Activated B cell treated with CpG ODN at 0.5 μM for 24 hours (primary cell): ENCODE measurements at regions of chr16 and their contacts with region 1.

Region 1: DNA sequence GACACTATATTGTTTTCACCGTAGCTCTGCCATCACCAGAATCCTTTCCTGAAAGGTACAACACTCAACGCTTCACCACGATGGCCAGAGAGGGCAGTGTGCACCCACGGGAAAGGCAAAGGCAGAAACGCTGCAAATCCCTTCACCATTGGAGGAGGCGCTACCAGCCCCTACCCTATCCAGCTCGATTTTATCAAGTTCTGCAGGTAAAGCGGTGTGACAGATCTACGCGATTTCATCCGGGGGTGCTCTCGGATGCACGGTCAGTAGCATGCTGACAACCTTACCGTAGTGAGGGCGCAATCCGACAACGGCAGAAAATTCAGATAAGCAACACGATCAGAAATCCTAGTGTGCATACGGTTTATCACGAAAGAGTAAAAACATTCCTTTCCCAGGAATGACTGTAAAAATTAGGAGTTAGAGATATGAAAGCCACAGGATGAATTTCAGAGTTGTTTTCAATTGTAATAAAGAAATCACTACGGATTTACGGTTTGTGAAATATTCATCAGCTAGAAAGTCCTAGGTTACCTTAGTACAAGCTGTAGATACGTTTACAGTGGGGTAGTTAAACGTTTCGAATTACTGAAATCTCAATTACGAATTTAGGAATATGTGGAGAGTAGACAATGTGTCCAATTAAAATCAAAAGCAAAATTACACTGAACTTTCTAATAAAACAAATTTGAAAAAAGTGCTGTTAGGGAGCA is 1.8 kb downstream of the NETO2 start:
- DNase-seq: peak; percentile 69
- ATAC-seq: peak; percentile 53
- H3K4me3 Mint-ChIP-seq: peak overlapping the region; percentile 86
- H3K27ac Mint-ChIP-seq: peak overlapping the region; percentile 59
- H3K4me1 Mint-ChIP-seq: peaks cover 23% of the 10 kb centered on the region
- H3K27me3 Mint-ChIP-seq: no peaks in the 10 kb centered on the region
- CTCF ChIP-seq: no peak

Region 2: GRCh38 chr16:46621006-46621933 is 520.7 kb before region 1 on chr16 and contains the start of gene SHCBP1:
- CTCF ChIA-PET with region 1: no interaction called
- POLR2A ChIA-PET with region 1: no interaction called
- intact Hi-C with region 1: loop called (anchors 5 kb)
- DNase-seq: peak; percentile 63
- ATAC-seq: peak; percentile 97
- H3K4me3 Mint-ChIP-seq: peak within 1 kb of the TSS; percentile 88
- H3K27ac Mint-ChIP-seq: peak within 1 kb of the TSS; percentile 37
- H3K4me1 Mint-ChIP-seq: peaks cover 24% of the 10 kb centered on the region
- H3K27me3 Mint-ChIP-seq: no peaks in the 10 kb centered on the region
- CTCF ChIP-seq: no peak
- total RNA-seq, gene SHCBP1: 1.9 and 2.0 TPM in 2 replicates

Region 3: GRCh38 chr16:46947900-46948547 is 193.9 kb before region 1 on chr16:
- CTCF ChIA-PET with region 1: interaction called, 9 read pairs
- POLR2A ChIA-PET with region 1: no interaction called
- intact Hi-C with region 1: loop called (anchors 1 kb)
- DNase-seq: no peak
- ATAC-seq: peak; percentile 74
- H3K4me3 Mint-ChIP-seq: no peak overlapping the region
- H3K27ac Mint-ChIP-seq: no peak overlapping the region
- H3K4me1 Mint-ChIP-seq: peaks cover 7% of the 10 kb centered on the region
- H3K27me3 Mint-ChIP-seq: no peaks in the 10 kb centered on the region
- CTCF ChIP-seq: no peak

Region 4: DNA sequence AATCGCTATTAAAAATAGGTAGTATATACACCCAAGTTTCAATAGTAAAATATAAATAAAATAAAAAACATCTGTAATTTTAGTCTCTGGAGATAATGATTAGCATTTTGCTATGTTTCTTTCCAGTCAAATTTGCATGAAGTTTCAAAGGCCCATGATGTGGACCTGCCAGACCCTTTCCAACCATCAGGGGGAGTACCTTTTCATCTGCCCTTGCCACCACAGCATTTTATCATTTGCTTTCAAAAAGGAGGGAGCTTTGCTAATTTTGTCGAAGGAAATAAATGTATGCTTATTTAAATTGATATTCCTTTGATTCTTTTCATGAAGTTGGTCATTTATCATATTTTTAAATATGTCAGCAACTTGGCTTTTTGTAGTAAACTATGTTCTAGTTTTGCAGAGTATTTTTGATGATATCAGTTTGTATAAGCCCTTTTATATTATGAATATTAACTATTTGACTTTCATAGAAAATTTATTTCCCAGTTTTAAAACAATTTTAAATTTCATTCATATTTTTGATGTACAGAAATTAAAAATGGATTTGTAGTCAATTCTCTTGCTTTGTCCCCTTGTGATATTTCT is 117.0 kb after region 1 on chr16:
- CTCF ChIA-PET with region 1: no interaction called
- POLR2A ChIA-PET with region 1: no interaction called
- intact Hi-C with region 1: loop called (anchors 5 kb)
- DNase-seq: no peak
- ATAC-seq: no peak
- H3K4me3 Mint-ChIP-seq: no peak overlapping the region
- H3K27ac Mint-ChIP-seq: no peak overlapping the region
- H3K4me1 Mint-ChIP-seq: no peaks in the 10 kb centered on the region
- H3K27me3 Mint-ChIP-seq: no peaks in the 10 kb centered on the region
- CTCF ChIP-seq: peak; percentile 92

Region 5: GRCh38 chr16:48156790-48157209 is 1014.9 kb after region 1 on chr16:
- CTCF ChIA-PET with region 1: interaction called, 47 read pairs
- POLR2A ChIA-PET with region 1: no interaction called
- intact Hi-C with region 1: loop called (anchors 1 kb)
- DNase-seq: peak; percentile 77
- ATAC-seq: peak; percentile 54
- H3K4me3 Mint-ChIP-seq: no peak overlapping the region
- H3K27ac Mint-ChIP-seq: no peak overlapping the region
- H3K4me1 Mint-ChIP-seq: peaks cover 6% of the 10 kb centered on the region
- H3K27me3 Mint-ChIP-seq: peaks cover 8% of the 10 kb centered on the region
- CTCF ChIP-seq: peak; percentile 68

Region 6: DNA sequence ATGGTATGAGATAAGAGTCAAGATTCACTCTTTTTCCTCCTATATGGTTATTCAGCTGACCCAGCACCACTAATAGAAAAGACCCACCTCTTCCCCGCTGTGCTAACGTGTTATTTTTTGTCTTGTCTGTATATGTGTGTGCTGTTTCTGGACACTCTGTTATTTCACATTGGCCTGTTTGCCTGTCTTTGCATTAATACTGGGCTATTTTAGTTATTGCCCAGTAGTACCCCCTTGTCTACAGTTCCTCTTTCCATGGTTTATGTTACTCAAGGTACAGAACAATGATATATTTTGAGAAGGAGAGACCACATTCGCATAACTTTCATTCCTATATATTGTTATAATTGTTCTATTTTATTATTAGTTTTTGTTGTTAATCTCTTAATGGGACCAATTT is 1317.2 kb after region 1 on chr16:
- CTCF ChIA-PET with region 1: no interaction called
- POLR2A ChIA-PET with region 1: no interaction called
- intact Hi-C with region 1: loop called (anchors 5 kb)
- DNase-seq: no peak
- ATAC-seq: no peak
- H3K4me3 Mint-ChIP-seq: peak overlapping the region; percentile 1
- H3K27ac Mint-ChIP-seq: peak overlapping the region; percentile 69
- H3K4me1 Mint-ChIP-seq: peaks cover 64% of the 10 kb centered on the region
- H3K27me3 Mint-ChIP-seq: no peaks in the 10 kb centered on the region
- CTCF ChIP-seq: no peak